ENCODE measurements at regions of chr7 and their contacts with region 1.

Region 1: DNA sequence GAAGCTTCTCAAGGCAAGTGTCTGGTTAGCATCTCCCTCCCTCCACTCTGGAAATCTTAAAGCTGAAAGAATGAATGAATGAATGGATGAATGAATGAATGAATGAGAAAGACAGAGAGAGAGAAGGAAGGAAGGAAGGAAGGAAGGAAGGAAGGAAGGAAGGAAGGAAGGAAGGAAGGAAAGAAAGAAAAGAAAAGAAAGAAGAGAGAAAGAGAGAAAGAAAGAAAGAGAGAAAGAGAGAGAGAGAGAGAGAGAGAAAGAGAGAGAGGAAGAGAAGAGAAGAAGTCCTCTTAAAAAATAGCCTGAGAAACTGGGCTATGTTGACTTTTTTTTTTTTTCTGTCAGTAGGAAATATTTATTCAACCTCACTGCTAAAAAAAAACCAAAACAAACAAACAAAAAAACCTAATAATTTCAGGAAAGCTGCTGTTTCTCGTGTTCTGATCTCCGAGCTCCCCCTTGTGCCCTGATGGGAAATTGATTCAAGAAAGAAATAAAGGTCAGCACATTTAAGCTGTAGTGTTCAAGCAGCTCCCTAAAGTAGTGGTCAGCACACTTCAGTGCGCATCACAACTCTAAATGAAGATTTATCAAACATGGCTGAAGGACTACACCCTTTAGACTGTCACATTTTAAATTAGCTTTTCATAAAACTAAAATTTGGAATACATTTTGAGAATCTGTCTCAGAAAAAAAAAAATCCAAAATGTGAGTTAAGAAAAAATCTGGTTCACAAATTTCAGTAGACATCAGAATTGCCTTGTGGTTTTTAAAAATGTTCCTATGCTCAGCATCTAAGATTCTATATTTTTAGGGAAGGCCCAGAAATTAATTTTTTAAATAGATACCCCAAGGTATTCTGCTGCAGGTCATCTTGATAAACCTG is 154.3 kb downstream of the ELAPOR2 start:
- DNase-seq: peak; percentile 31
- H3K4me3 ChIP-seq: no peak overlapping the region
- H3K27ac ChIP-seq: no peak overlapping the region
- H3K4me1 ChIP-seq: no peaks in the 10 kb centered on the region
- H3K27me3 ChIP-seq: no peaks in the 10 kb centered on the region
- CTCF ChIP-seq: peak; percentile 45 to 47
- POLR2A ChIP-seq: no peak

Region 2: DNA sequence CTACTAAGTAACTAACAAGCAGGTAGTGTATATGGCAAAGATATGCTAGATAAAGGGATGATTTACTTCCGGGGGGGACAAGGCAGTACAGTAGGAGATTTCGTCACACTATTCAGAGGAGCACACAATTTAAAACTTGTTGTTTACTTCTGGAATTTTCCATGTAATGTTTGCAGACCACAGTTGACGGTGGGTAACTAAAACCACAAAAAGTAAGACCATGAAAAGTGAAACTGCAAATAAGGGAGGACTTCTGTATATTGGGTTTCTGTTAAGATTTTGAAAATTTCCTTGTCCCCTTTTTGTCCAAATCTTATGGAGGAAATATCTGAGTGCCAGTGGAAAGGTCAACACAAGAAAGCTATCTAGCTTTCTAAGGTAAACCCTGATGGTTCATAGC is 15.7 kb before region 1 on chr7:
- CTCF ChIA-PET with region 1: interaction called, 14 read pairs
- POLR2A ChIA-PET with region 1: no interaction called
- dilution Hi-C with region 1: no loop called
- intact Hi-C with region 1: no loop called
- DNase-seq: no peak
- H3K4me3 ChIP-seq: no peak overlapping the region
- H3K27ac ChIP-seq: no peak overlapping the region
- H3K4me1 ChIP-seq: no peaks in the 10 kb centered on the region
- H3K27me3 ChIP-seq: no peaks in the 10 kb centered on the region
- CTCF ChIP-seq: no peak
- POLR2A ChIP-seq: no peak